ENCODE measurements at regions of chr18 and their contacts with region 1.

Region 1: GRCh38 chr18:64513401-64513800 is 364.5 kb upstream of the LINC00305 start:
- DNase-seq: no peak

Region 2: DNA sequence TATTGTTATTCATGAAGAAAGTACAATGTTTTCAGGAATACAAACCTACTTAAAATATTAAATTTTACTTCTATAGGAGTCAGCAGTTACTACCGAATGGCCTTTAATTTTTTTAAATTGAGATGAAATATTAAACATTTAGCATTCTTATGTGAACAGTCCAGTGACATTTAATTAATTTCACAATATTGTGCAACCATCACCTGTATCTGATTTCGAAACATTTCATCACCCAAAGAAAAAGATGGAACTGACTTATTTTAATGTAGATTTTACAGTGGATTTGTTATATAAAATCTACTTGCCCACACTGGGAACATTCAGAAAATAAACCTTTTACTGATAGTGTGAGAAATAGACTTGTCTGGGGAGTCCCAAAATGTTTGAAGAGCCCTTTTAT is 220.7 kb after region 1 on chr18:
- intact Hi-C with region 1: no loop called
- DNase-seq: no peak

Region 3: GRCh38 chr18:66461344-66461743 is 1947.9 kb after region 1 on chr18:
- intact Hi-C with region 1: loop called in 1 of 2 experiments (anchors 10 kb)
- DNase-seq: no peak

Measured in posterior vena cava (tissue), 2 donors.